ENCODE measurements at regions of chr10 and their contacts with region 1.

Region 1: DNA sequence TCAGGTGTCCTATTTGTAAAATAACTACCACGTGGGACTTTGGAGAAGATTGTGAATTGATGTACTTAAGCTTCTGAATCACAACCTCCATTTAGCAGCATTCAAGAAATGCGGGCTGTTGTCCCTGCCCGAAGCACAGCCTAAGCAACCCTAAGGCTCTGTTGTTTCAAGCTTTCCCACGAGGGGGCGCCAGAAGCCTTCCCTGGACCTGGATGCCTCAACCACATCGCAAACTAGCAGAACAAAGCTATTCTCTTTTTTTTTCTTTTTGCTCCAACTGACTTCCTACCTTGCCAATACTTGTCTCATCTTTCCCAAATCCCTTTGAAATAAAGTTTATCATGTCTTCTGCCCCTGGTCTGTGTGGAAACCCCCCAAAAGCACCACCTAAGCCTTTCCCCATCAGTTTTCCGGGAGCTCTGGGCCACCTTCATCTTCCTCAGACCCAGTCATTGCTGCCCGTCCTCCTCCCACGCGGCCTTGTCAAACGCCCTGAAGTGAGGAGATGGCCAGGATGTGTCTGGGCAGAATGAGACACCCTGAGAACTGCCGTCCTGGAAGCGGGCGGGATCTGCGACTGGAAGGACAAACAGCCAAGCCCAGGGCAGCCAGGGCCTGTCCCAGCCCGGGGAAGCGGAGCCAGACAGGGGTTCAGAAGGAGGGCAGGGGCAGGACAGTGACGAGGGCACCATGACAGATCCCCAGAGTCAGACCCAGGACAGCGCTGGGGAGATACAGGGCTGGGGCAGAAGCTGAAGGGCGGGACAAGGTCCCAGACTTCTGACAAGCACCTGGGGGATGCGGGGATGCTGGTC is 112.7 kb downstream of the SLIT1 start:
- DNase-seq: peak; percentile 56
- ATAC-seq: peak; percentile 91
- H3K4me3 ChIP-seq: no peak overlapping the region
- H3K27ac ChIP-seq: no peak overlapping the region
- H3K4me1 ChIP-seq: peaks cover 0 to 10% of the 10 kb centered on the region in 2 experiments; a peak in 2 of 4 replicates
- H3K27me3 ChIP-seq: peaks cover 24% of the 10 kb centered on the region
- CTCF ChIP-seq: peak; percentile 89 to 94 (median 93)
- POLR2A ChIP-seq: no peak
- RAD21 ChIP-seq: peak; percentile 93

Region 2: DNA sequence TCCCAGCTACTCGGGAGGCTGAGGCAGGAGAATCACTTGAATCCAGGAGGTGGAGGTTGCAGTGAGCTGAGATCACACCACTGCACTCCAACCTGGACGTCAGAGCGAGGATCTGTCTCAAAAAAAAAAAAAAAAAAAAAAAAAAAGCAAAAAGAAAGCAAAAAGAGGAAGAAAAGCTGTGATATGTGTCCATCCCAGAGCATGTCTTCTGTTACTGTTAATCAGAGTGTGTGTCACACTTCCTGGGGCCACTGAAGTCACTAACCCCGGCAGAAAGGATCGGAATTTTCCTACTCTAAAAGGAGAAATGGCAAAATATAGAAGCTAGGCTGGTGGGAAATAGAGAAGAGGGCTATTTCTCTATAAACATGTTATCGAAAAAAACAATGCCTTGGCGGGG is 364.6 kb before region 1 on chr10:
- CTCF ChIA-PET with region 1: no interaction called
- POLR2A ChIA-PET with region 1: no interaction called
- RAD21 ChIA-PET with region 1: no interaction called
- intact Hi-C with region 1: no loop called
- DNase-seq: no peak
- ATAC-seq: no peak
- H3K4me3 ChIP-seq: no peak overlapping the region
- H3K27ac ChIP-seq: no peak overlapping the region
- H3K4me1 ChIP-seq: no peaks in the 10 kb centered on the region
- H3K27me3 ChIP-seq: no peaks in the 10 kb centered on the region
- CTCF ChIP-seq: no peak
- POLR2A ChIP-seq: no peak
- RAD21 ChIP-seq: no peak

Region 3: GRCh38 chr10:97000487-97001182 is 72.4 kb before region 1 on chr10:
- CTCF ChIA-PET with region 1: no interaction called
- POLR2A ChIA-PET with region 1: no interaction called
- RAD21 ChIA-PET with region 1: no interaction called
- intact Hi-C with region 1: no loop called
- DNase-seq: no peak
- ATAC-seq: no peak; the same call in 1 of the 2 replicates
- H3K4me3 ChIP-seq: no peak overlapping the region
- H3K27ac ChIP-seq: no peak overlapping the region
- H3K4me1 ChIP-seq: no peaks in the 10 kb centered on the region
- H3K27me3 ChIP-seq: no peaks in the 10 kb centered on the region
- CTCF ChIP-seq: no peak
- POLR2A ChIP-seq: no peak
- RAD21 ChIP-seq: no peak

Region 4: DNA sequence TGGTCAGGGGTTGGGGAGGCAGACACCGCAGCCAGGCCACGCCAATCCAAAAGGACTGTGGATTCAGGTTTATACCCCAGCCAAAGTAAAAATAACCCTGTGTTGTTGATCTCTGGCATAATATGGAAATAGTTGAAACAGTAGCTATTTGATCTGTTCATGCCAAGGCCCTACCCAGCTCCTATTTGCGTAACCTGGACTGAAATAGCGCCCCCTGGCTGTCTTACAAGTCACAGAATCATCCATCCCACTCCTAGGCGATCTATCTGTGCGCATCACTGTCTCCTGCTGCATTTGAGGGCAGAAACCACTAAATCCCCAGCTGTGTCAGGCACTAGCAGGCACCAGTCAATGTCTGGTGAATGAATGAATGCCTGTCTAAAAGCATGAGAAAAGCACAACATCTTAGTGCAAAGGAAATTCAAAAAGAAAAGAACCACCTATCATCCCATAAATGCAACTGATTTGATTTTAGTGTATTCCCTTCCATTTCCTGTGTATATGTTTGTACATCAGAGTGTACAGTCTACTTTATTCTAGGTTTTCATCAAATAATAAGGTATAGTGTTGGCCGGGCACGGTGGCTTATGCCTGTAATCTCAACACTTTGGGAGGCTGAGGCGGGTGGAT is 47.3 kb before region 1 on chr10:
- CTCF ChIA-PET with region 1: interaction called, 10 read pairs
- POLR2A ChIA-PET with region 1: no interaction called
- RAD21 ChIA-PET with region 1: no interaction called
- intact Hi-C with region 1: no loop called
- DNase-seq: peak; percentile 47
- ATAC-seq: peak; percentile 87
- H3K4me3 ChIP-seq: no peak overlapping the region
- H3K27ac ChIP-seq: no peak overlapping the region
- H3K4me1 ChIP-seq: peaks cover 11 to 20% of the 10 kb centered on the region in 2 experiments; a peak in 3 of 4 replicates
- H3K27me3 ChIP-seq: no peaks in the 10 kb centered on the region; the same call in 1 of the 2 replicates
- CTCF ChIP-seq: peak; percentile 66 to 87 (median 82)
- POLR2A ChIP-seq: no peak
- RAD21 ChIP-seq: peak; percentile 64

Region 5: GRCh38 chr10:97059006-97059871 is 13.8 kb before region 1 on chr10:
- CTCF ChIA-PET with region 1: interaction called, 10 read pairs
- POLR2A ChIA-PET with region 1: no interaction called
- RAD21 ChIA-PET with region 1: no interaction called
- intact Hi-C with region 1: no loop called
- DNase-seq: no peak
- ATAC-seq: peak; percentile 58
- H3K4me3 ChIP-seq: no peak overlapping the region
- H3K27ac ChIP-seq: no peak overlapping the region
- H3K4me1 ChIP-seq: no peaks in the 10 kb centered on the region
- H3K27me3 ChIP-seq: no peaks in the 10 kb centered on the region
- CTCF ChIP-seq: peak in 1 of 3 experiments; percentile 27; a peak in 2 of 6 replicates
- POLR2A ChIP-seq: no peak
- RAD21 ChIP-seq: no peak; the same call in 1 of the 2 replicates

Region 6: GRCh38 chr10:97123765-97124164 is 50.7 kb after region 1 on chr10:
- CTCF ChIA-PET with region 1: interaction called, 48 read pairs
- POLR2A ChIA-PET with region 1: no interaction called
- RAD21 ChIA-PET with region 1: no interaction called
- intact Hi-C with region 1: no loop called
- DNase-seq: no peak
- ATAC-seq: no peak
- H3K4me3 ChIP-seq: no peak overlapping the region
- H3K27ac ChIP-seq: no peak overlapping the region
- H3K4me1 ChIP-seq: no peaks in the 10 kb centered on the region
- H3K27me3 ChIP-seq: peaks cover 41% of the 10 kb centered on the region
- CTCF ChIP-seq: no peak
- POLR2A ChIP-seq: no peak
- RAD21 ChIP-seq: no peak

Region 7: GRCh38 chr10:97234400-97234799 is 161.3 kb after region 1 on chr10:
- CTCF ChIA-PET with region 1: interaction called, 15 read pairs
- POLR2A ChIA-PET with region 1: no interaction called
- RAD21 ChIA-PET with region 1: no interaction called
- intact Hi-C with region 1: loop called (anchors 1 kb)
- DNase-seq: peak; percentile 12
- ATAC-seq: peak; percentile 44; the same call in 1 of the 2 replicates
- H3K4me3 ChIP-seq: no peak overlapping the region
- H3K27ac ChIP-seq: no peak overlapping the region
- H3K4me1 ChIP-seq: no peaks in the 10 kb centered on the region
- H3K27me3 ChIP-seq: no peaks in the 10 kb centered on the region
- CTCF ChIP-seq: peak; percentile 54 to 75 (median 64); a peak in 5 of 6 replicates
- POLR2A ChIP-seq: no peak
- RAD21 ChIP-seq: peak; percentile 69

Region 8: GRCh38 chr10:97463363-97464132 is 390.5 kb after region 1 on chr10:
- CTCF ChIA-PET with region 1: no interaction called
- POLR2A ChIA-PET with region 1: no interaction called
- RAD21 ChIA-PET with region 1: no interaction called
- intact Hi-C with region 1: loop called (anchors 5 kb)
- DNase-seq: peak; percentile 40
- ATAC-seq: peak; percentile 69
- H3K4me3 ChIP-seq: no peak overlapping the region
- H3K27ac ChIP-seq: peak overlapping the region; percentile 68
- H3K4me1 ChIP-seq: peaks cover 20 to 34% of the 10 kb centered on the region in 2 experiments
- H3K27me3 ChIP-seq: no peaks in the 10 kb centered on the region
- CTCF ChIP-seq: peak; percentile 82 to 95 (median 95)
- POLR2A ChIP-seq: no peak
- RAD21 ChIP-seq: peak; percentile 95

Measured in HCT116 (cell line).